B cell (primary cell): ENCODE measurements at regions of chr19 and their contacts with region 1.

Region 1: DNA sequence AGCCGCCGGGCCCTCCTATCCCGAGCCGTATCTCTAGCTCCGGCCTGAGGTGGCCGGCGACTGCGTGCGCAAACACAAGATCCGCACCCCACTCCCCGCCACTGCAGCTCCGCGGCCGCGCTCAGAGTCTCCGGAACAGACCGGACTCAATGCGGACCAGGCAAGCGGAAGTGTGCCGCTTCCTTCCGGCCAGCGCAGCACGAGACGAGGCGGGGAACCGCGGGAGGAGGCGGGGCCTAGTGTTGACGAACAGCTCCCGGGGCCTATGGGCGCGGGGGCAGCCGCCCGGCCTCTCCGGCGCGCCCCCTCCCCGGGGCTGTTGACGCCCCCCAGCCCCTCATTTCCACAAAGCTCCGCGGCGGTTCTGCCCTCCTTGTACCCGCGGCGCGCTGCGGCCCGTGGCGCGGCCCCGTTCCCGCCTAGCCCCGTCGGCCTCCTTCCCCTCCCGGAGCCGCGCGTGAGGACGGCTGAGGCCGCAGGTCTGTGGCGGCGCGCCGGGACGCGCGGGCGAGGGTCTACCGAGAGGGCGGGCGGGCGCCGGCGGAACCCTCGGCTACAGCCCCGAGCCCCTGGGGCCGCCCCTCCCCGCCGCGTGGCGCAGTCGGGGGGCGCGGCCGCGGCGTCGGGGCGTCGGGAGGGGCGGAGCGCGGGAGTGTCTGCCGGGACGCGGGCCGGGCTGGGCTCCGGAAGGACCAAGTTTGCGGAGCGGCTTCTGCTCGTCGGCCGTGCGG is at the start of gene DPY19L3:
- DNase-seq: peak; percentile 93
- ATAC-seq: peak; percentile 89
- H3K4me3 ChIP-seq: peak within 1 kb of the TSS; percentile 66 to 89 (median 80)
- H3K4me3 Mint-ChIP-seq: peak within 1 kb of the TSS; percentile 92
- H3K27ac ChIP-seq: peak within 1 kb of the TSS; percentile 74 to 93
- H3K27ac Mint-ChIP-seq: peak within 1 kb of the TSS; percentile 94
- H3K4me1 ChIP-seq: peaks cover 11 to 19% of the 10 kb centered on the region in 2 donors
- H3K4me1 Mint-ChIP-seq: peaks cover 15% of the 10 kb centered on the region
- H3K27me3 ChIP-seq: no peaks in the 10 kb centered on the region
- H3K27me3 Mint-ChIP-seq: no peaks in the 10 kb centered on the region
- CTCF ChIP-seq: no peak
- total RNA-seq, gene DPY19L3: 33.3 and 40.0 TPM in 2 replicates

Region 2: DNA sequence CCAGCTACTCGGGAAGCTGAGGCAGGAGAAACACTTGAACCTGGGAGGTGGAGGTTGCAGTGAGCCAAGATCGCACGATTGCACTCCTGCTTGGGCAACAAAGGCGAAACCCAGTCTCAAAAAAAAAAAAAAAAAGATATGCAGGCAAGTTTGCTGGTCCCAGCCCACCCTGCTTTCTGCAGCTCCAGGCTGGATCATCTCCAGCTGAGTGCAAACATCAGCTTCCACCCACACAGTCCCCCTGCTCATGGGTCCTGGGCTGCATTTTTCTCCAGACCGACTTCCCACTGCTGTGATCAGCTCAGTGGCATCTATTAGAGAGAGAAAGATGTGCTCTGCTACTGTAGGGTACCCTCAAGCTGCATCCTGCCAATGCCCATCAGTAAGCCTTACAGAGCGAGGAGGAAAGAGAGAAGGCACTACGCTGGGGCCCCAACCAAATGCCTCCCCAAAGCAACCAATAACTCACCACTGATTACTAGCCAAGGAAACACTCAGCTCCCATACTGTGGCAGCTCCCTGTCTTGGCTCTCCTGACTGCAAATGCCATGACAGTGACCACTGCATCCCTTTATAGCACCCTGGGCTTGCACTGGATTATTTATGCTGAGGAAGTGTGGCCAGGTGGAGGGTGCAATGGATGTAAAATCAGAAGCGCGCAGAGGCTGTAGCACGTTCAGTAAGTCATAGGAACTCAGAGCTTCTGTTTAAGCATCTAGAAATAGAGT is 231.0 kb before region 1 on chr19:
- CTCF ChIA-PET with region 1: no interaction called
- POLR2A ChIA-PET with region 1: no interaction called
- intact Hi-C with region 1: no loop called
- DNase-seq: no peak
- ATAC-seq: no peak
- H3K4me3 ChIP-seq: no peak overlapping the region
- H3K4me3 Mint-ChIP-seq: no peak overlapping the region
- H3K27ac ChIP-seq: no peak overlapping the region
- H3K27ac Mint-ChIP-seq: no peak overlapping the region
- H3K4me1 ChIP-seq: no peaks in the 10 kb centered on the region
- H3K4me1 Mint-ChIP-seq: no peaks in the 10 kb centered on the region
- H3K27me3 ChIP-seq: no peaks in the 10 kb centered on the region
- H3K27me3 Mint-ChIP-seq: no peaks in the 10 kb centered on the region
- CTCF ChIP-seq: no peak

Region 3: GRCh38 chr19:32345261-32346207 is 60.1 kb before region 1 on chr19 and contains the start of gene ZNF507:
- CTCF ChIA-PET with region 1: interaction called, 5 read pairs
- POLR2A ChIA-PET with region 1: interaction called, 3 read pairs
- intact Hi-C with region 1: loop called (anchors 1 kb)
- DNase-seq: peak; percentile 91
- ATAC-seq: peak; percentile 90
- H3K4me3 ChIP-seq: peak within 1 kb of the TSS; percentile 83 to 97 (median 93)
- H3K4me3 Mint-ChIP-seq: peak within 1 kb of the TSS; percentile 97
- H3K27ac ChIP-seq: peak within 1 kb of the TSS; percentile 69 to 88
- H3K27ac Mint-ChIP-seq: peak within 1 kb of the TSS; percentile 94
- H3K4me1 ChIP-seq: peaks cover 23 to 28% of the 10 kb centered on the region in 2 donors
- H3K4me1 Mint-ChIP-seq: peaks cover 27% of the 10 kb centered on the region
- H3K27me3 ChIP-seq: peaks cover 0 to 6% (median 0%) of the 10 kb centered on the region in 4 experiments
- H3K27me3 Mint-ChIP-seq: no peaks in the 10 kb centered on the region
- CTCF ChIP-seq: no peak
- total RNA-seq, gene ZNF507: 38.6 and 40.5 TPM in 2 replicates